ENCODE measurements at regions of chrX and their contacts with region 1.

Region 1: DNA sequence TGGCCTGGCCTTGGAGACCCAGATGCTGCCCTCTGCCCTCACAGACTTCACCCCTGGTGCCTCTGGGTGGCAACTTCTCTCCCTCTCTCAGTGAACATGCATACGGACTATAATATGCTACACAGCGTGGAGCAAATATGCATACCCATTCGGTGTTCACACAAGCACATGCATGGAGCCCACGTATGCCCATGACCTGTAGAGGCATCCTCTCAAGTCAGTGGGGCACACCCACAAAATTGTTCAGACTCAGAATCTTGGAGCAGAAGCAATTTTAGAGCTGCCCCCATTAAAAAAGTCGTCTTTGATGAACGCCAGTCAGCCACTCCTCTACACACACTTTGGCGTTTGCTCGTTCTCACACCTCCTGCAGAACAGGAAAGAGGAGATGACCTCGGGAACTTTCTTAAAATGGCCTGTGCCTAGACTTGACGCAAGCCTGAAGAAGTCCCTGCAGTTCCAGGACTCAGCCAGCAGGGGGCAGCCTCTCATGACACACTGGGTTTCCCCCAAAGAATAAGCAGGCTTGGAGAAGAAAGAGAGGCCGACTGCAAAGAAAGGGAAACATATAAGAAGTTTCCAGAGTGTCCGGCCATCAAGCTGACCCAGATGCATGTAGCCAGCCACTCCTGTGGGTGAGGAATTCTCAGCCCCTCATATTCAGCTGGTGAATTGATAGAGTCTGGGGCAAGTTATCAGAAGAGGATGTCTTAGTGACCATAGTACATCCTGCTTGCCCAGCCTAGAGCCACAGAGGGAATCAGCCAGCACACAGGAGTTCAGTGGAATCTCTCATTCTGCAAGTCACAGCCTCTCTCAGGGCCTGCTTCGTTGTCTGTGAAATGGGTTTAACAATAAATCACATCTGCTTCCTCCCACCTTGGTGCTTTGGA is 17.3 kb downstream of the APLN start:
- DNase-seq: no peak
- H3K4me3 ChIP-seq: no peak overlapping the region
- H3K27ac ChIP-seq: no peak overlapping the region
- H3K27me3 ChIP-seq: peaks cover 3% of the 10 kb centered on the region
- CTCF ChIP-seq: peak; percentile 80

Region 2: DNA sequence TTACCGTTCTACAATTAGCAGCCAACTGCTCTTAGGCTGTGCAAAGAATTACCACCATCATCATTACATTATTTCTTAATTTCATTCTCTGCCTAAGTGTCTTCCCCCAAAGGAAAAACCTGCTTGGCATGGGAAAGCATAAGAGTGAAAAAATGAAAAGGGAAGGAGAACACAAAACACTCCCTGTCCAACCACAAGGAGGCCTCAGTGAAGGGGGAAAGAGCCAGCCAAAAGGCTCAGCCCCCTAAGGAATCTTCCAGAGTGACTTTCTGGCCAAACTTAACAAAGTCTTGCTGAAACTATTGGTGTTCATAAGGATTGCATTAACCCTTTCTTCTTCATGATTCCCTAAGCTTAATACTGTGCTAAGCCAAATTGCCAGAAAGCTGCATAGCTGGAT is 401.6 kb before region 1 on chrX:
- CTCF ChIA-PET with region 1: no interaction called
- POLR2A ChIA-PET with region 1: no interaction called
- DNase-seq: no peak
- H3K4me3 ChIP-seq: no peak overlapping the region
- H3K27ac ChIP-seq: no peak overlapping the region
- H3K27me3 ChIP-seq: no peaks in the 10 kb centered on the region
- CTCF ChIP-seq: no peak

Region 3: GRCh38 chrX:129522184-129523078 is 115.0 kb before region 1 on chrX:
- CTCF ChIA-PET with region 1: no interaction called
- POLR2A ChIA-PET with region 1: no interaction called
- DNase-seq: no peak
- H3K4me3 ChIP-seq: peak overlapping the region; percentile 79
- H3K27ac ChIP-seq: no peak overlapping the region
- H3K27me3 ChIP-seq: no peaks in the 10 kb centered on the region
- CTCF ChIP-seq: peak; percentile 35; the same call in 1 of the 2 replicates

Region 4: DNA sequence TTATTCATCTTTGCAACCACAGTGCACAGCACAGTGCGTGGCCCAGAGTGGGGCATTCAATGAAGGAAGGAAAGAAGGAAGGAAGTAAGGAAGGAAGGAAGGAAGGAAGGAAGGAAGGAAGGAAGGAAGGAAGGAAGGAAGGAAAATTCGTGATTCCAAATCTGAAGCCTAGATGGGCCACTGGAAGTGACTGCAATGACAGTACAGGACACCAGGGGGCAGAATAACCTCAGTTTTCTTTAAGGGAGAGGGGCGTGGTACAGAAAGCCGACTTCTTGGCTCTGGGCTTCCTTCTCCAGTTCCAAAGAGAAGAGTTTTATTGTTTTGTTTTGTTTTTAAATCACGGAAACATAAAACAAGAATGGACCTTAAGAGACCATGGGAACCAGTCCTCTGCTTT is 30.5 kb before region 1 on chrX:
- CTCF ChIA-PET with region 1: interaction called, 12 read pairs
- POLR2A ChIA-PET with region 1: no interaction called
- DNase-seq: no peak
- H3K4me3 ChIP-seq: no peak overlapping the region
- H3K27ac ChIP-seq: no peak overlapping the region
- H3K27me3 ChIP-seq: peaks cover 2% of the 10 kb centered on the region
- CTCF ChIP-seq: peak; percentile 61